ENCODE measurements at regions of chr2 and their contacts with region 1.

Region 1: GRCh38 chr2:189783927-189784867 is at the starts of genes ORMDL1 and PMS1:
- DNase-seq: peak; percentile 93
- H3K4me3 Mint-ChIP-seq: peak within 1 kb of the TSS; percentile 93
- H3K27ac Mint-ChIP-seq: peak within 1 kb of the TSS; percentile 92
- H3K4me1 Mint-ChIP-seq: peaks cover 51% of the 10 kb centered on the region
- H3K27me3 Mint-ChIP-seq: no peaks in the 10 kb centered on the region
- total RNA-seq, gene ORMDL1: 34.6 to 37.3 TPM
- total RNA-seq, gene PMS1: 29.7 to 32.5 TPM

Region 2: GRCh38 chr2:189302274-189302948 is 481.8 kb before region 1 on chr2:
- CTCF ChIA-PET with region 1: no interaction called
- intact Hi-C with region 1: loop called (anchors 2 kb)
- DNase-seq: peak; percentile 41
- H3K4me3 Mint-ChIP-seq: peak overlapping the region; percentile 7
- H3K27ac Mint-ChIP-seq: peak overlapping the region; percentile 91
- H3K4me1 Mint-ChIP-seq: peaks cover 79% of the 10 kb centered on the region
- H3K27me3 Mint-ChIP-seq: no peaks in the 10 kb centered on the region

Region 3: DNA sequence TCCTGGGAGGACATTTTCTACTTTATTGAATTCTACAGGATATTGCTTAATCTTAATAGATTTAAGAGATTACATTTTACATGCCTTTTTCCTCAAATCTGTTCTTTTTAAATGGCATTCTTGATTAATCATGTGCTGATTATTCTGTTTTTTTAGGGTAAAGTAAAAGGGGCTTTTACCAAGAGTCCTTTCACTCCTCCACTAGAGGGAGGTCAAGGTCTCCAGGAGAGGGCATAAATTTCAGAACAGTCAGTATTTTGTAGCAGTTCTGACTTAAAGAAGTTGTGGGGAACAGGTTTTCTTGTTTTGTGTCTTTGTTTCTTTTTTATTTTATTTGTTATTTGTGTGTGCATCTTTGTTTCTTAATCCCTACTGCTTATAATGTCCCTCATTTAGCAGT is 317.5 kb before region 1 on chr2:
- CTCF ChIA-PET with region 1: no interaction called
- intact Hi-C with region 1: loop called (anchors 5 kb)
- DNase-seq: no peak
- H3K4me3 Mint-ChIP-seq: no peak overlapping the region
- H3K27ac Mint-ChIP-seq: no peak overlapping the region
- H3K4me1 Mint-ChIP-seq: no peaks in the 10 kb centered on the region
- H3K27me3 Mint-ChIP-seq: no peaks in the 10 kb centered on the region

Region 4: GRCh38 chr2:189674374-189675112 is 109.7 kb before region 1 on chr2 and contains the start of gene ANKAR:
- CTCF ChIA-PET with region 1: no interaction called
- intact Hi-C with region 1: loop called (anchors 1 kb)
- DNase-seq: peak; percentile 78
- H3K4me3 Mint-ChIP-seq: peak within 1 kb of the TSS; percentile 89
- H3K27ac Mint-ChIP-seq: peak within 1 kb of the TSS; percentile 94
- H3K4me1 Mint-ChIP-seq: peaks cover 35% of the 10 kb centered on the region
- H3K27me3 Mint-ChIP-seq: no peaks in the 10 kb centered on the region
- total RNA-seq, gene ANKAR: 1.6 to 2.5 TPM

Region 5: DNA sequence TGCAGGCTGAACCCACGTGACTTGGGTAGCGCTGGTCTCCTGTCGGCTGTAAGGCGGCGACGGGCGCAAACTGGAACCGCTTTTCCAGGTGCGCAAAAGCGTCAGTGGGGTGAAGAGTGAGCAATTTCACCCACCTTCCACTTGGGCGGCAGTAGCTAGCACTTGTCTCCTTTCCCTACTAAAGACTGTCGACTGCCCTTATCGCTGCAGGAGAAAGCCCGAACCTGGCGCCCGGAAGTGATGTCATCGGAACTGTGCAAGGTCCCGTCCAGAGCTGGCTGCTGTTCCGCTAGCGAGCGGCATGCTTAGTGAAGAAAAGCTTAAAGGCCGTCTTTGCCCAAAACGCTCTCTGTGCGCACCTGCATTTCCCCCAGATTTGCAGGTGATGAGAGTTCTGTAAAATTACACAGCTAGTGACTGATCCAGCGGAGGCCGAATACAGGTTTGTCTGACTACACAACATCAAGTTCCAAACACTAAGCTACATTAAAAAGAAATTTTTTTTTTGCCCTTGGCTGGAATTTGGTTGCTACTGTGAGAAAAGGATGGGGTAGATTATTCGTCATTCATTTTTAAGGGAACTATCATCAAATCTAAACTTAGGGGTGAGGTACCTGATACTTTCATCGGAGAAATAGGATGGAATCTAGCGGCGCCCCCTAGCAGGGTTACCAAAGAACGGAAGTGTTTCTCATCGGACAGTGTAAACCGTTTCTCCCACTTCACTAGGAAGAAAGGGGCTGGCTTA is 21.5 kb before region 1 on chr2 and contains the start of gene OSGEPL1:
- CTCF ChIA-PET with region 1: interaction called, 11 read pairs
- intact Hi-C with region 1: loop called (anchors 1 kb)
- DNase-seq: peak; percentile 95
- H3K4me3 Mint-ChIP-seq: peak within 1 kb of the TSS; percentile 92
- H3K27ac Mint-ChIP-seq: peak within 1 kb of the TSS; percentile 97
- H3K4me1 Mint-ChIP-seq: peaks cover 13% of the 10 kb centered on the region
- H3K27me3 Mint-ChIP-seq: no peaks in the 10 kb centered on the region
- total RNA-seq, gene OSGEPL1: 15.5 to 15.8 TPM

Region 6: DNA sequence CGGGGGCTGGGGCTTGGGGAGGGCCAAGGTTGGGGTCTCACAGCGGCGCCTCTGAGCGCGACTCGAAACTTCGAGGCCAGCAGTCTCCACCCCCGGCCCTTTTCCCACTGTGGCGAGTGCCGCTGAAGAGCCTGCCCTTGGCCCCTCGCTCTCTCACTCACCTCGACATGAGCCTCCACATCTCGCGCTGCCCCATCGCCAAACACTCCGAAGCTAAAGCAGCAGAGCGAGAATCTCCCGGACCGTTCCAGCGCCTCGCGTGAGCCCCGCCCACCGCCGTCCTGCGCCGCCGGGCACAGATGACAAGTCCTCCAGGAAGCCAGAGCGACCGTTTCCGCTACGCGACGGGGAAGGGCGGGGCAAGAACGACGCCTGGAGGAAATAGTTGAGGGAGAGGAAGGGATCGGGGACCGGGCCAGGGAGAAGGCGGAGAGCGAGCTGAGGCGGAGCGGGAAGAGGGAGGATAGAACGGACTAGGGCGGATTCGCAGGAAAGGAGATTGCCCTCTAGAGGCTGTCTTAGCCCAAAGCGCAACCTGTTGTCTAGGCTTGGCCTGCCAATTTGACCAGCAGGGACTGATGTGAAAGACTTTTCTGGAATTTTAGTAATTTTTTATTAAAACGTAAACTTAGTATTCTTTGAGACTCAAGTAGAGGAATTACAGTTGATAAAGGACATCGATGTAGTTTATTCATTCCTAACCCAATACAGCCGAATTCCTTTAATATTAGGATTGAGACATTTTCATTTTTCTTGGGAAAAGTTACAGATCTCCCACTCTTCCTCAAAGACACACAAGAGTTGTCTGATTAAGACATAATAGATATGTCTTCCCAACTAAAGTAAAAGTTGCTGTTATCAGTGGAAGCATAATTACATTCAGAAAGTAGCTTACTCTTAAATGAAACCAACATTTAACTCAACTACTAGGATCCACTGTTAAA is 535.6 kb after region 1 on chr2 and contains the start of gene HIBCH:
- CTCF ChIA-PET with region 1: no interaction called
- intact Hi-C with region 1: loop called (anchors 1 kb)
- DNase-seq: peak; percentile 94
- H3K4me3 Mint-ChIP-seq: peak within 1 kb of the TSS; percentile 91
- H3K27ac Mint-ChIP-seq: peak within 1 kb of the TSS; percentile 88
- H3K4me1 Mint-ChIP-seq: peaks cover 39% of the 10 kb centered on the region
- H3K27me3 Mint-ChIP-seq: no peaks in the 10 kb centered on the region
- total RNA-seq, gene HIBCH: 19.2 TPM

Region 7: DNA sequence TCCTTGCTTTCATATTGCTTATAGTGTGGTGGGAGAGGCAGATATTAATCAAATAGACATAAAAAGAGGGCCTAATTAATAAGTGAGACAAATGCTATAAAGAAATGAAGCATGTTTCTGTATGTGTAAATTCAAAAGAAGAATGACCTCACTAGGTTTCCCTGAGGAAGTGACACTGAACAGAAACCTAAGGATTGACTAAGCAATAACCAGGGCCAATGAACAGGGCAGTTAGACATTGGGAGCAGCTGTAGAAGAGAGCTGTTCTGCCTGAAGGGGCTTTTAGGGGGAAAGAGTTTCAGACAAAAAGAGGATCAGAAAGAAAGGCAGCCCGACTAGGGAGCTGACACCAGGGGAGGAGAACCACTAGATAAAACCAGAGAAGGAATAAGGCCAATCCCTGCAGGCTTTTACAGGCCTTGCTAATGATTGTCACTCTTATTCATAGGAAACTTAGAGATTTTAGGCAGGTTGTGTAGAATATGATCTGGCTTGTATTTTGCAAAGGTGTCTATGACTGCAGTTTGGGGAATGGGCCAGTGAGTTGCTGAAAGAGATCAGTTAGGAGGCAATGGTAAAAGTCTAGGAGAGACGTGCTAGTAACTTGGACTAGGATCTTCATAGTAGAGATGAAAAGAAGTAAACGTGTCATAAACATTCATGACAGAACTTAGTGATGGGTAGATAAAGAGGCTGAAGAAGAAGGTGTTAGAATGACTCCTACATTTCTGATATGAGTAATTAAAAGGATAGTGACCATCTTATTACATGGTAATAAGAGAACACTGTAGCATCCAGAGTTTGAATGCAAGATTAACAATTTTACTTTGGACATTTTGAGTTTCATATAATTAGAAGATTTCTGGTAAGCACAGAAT is 1866.9 kb after region 1 on chr2:
- CTCF ChIA-PET with region 1: no interaction called
- intact Hi-C with region 1: loop called (anchors 10 kb)
- DNase-seq: no peak
- H3K4me3 Mint-ChIP-seq: no peak overlapping the region
- H3K27ac Mint-ChIP-seq: no peak overlapping the region
- H3K4me1 Mint-ChIP-seq: peaks cover 8% of the 10 kb centered on the region
- H3K27me3 Mint-ChIP-seq: no peaks in the 10 kb centered on the region

Measured in activated naive CD4-positive, alpha-beta T cell treated with anti-CD3 and anti-CD28 coated beads for 36 hours (primary cell).